Heart left ventricle (tissue), 16 donors: ENCODE measurements at regions of chr7 and their contacts with region 1.

Region 1: GRCh38 chr7:143391462-143392404 is 10.6 kb downstream of the ZYX start:
- DNase-seq: peak; percentile 64 to 81 (median 77)
- ATAC-seq: peak; percentile 42 to 83 (median 74)
- H3K4me3 ChIP-seq: peak overlapping the region in 4 of 12 donors; percentile 2 to 25 (median 18)
- H3K27ac ChIP-seq: peak overlapping the region; percentile 68 to 99 (median 84)
- H3K4me1 ChIP-seq: peaks cover 2 to 91% (median 50%) of the 10 kb centered on the region in 12 donors
- H3K27me3 ChIP-seq: no peaks in the 10 kb centered on the region
- CTCF ChIP-seq: no peak
- POLR2A ChIP-seq: peak in 1 of 2 donors; percentile 20

Region 2: DNA sequence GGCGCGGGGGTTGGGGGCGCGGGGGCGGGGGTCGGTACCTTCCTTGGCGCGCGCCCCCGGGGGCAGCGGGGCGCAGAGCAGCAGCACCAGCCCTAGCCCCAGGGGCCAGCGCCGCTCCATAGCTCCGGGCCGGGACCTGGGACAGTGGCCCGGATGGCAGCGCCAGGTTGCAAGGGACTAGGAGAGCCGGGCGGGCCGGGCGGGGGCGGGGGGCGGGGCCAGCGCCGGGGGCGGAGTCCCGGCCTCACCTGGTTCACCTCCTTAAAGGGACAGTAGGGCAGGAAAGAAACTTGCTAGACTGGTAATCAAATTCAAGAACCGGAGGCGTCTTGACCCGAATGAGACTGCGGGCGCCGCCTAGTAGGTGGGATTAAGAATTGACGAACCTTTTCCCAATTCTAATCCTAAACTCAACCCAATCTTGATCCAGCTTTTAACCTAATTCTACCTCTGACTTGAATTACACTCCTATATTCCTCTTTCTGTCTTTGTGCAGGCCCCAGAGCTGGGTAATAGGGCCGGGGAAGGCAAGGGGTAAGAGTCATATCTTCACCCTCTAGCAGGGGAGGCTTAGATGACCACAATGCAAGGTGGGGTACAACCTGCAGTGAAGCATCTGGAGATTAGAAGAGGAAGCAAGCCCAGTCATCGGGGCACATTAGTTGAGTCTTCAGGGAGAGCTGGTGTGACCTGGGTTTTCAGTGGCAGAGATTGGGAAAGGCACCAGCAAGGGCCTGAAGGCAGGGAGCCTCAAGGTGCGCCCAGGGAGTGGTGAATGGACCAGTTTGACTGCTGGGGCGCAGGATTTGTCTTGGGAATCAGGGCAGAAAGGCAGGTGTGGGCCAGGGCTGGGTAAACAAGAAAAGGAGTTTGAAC is 17.2 kb after region 1 on chr7 and contains the start of gene EPHA1:
- intact Hi-C with region 1: loop called in 1 of 10 experiments (anchors 2 kb)
- DNase-seq: peak in 1 of 5 donors; percentile 24
- ATAC-seq: no peak
- H3K4me3 ChIP-seq: peak within 1 kb of the TSS in 9 of 12 donors; percentile 18 to 53 (median 25)
- H3K27ac ChIP-seq: no peak within 1 kb of the TSS
- H3K4me1 ChIP-seq: peaks cover 0 to 63% (median 17%) of the 10 kb centered on the region in 12 donors
- H3K27me3 ChIP-seq: peaks cover 0 to 23% (median 0%) of the 10 kb centered on the region in 9 donors
- CTCF ChIP-seq: peak in 11 of 12 donors; percentile 11 to 46 (median 24)
- POLR2A ChIP-seq: no peak
- total RNA-seq, gene EPHA1: 0.06 to 0.51 (median 0.48) TPM in 3 of 9 donors, not detected in the others